Dorsolateral prefrontal cortex (tissue), 120 donors: ENCODE measurements at regions of chr2 and their contacts with region 1.

Region 1: GRCh38 chr2:73985308-73986084 is 786 bp downstream of the TET3 start:
- DNase-seq: peak in 1 of 10 donors; percentile 43
- H3K4me3 ChIP-seq: peak overlapping the region; percentile 29 to 78 (median 64)
- H3K27ac ChIP-seq: peak overlapping the region in 16 of 59 donors; percentile 5 to 79 (median 60)
- H3K27me3 ChIP-seq: no peaks in the 10 kb centered on the region
- CTCF ChIP-seq: peak in 1 of 56 donors; percentile 10

Region 2: DNA sequence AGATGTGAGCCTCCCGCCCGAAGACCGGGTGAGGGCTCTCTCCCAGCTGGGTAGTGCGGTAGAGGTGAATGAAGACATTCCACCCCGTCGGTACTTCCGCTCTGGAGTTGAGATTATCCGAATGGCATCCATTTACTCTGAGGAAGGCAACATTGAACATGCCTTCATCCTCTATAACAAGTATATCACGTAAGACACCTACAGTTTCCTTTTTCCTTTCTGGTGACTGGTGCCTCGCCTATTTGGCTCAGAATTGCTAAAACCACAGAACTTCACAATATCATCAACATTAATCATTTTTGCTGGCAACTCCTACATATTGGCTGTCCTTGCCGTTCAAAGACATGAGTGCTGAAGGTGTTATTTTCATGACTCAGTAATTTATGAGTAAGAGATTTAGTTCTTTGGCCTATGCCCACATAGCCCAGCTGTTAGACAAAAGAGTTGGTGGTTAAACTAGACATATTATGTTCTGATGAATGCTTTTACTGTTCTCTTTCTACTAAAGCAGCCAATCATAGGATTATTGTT is 154.6 kb before region 1 on chr2:
- intact Hi-C with region 1: loop called in 1 of 2 experiments (anchors 5 kb)
- DNase-seq: no peak
- H3K4me3 ChIP-seq: peak overlapping the region in 13 of 59 donors; percentile 2 to 96 (median 24)
- H3K27ac ChIP-seq: peak overlapping the region in 43 of 59 donors; percentile 4 to 99 (median 57)
- H3K27me3 ChIP-seq: no peaks in the 10 kb centered on the region
- CTCF ChIP-seq: no peak

Region 3: GRCh38 chr2:74119912-74120825 is 134.7 kb after region 1 on chr2:
- intact Hi-C with region 1: loop called in 1 of 2 experiments (anchors 5 kb)
- DNase-seq: peak; percentile 65 to 90 (median 79)
- H3K4me3 ChIP-seq: peak overlapping the region; percentile 51 to 91 (median 71)
- H3K27ac ChIP-seq: peak overlapping the region in 54 of 59 donors; percentile 40 to 95 (median 80)
- H3K27me3 ChIP-seq: no peaks in the 10 kb centered on the region
- CTCF ChIP-seq: peak; percentile 40 to 90 (median 74)